ENCODE measurements at regions of chr6 and their contacts with region 1.

Region 1: DNA sequence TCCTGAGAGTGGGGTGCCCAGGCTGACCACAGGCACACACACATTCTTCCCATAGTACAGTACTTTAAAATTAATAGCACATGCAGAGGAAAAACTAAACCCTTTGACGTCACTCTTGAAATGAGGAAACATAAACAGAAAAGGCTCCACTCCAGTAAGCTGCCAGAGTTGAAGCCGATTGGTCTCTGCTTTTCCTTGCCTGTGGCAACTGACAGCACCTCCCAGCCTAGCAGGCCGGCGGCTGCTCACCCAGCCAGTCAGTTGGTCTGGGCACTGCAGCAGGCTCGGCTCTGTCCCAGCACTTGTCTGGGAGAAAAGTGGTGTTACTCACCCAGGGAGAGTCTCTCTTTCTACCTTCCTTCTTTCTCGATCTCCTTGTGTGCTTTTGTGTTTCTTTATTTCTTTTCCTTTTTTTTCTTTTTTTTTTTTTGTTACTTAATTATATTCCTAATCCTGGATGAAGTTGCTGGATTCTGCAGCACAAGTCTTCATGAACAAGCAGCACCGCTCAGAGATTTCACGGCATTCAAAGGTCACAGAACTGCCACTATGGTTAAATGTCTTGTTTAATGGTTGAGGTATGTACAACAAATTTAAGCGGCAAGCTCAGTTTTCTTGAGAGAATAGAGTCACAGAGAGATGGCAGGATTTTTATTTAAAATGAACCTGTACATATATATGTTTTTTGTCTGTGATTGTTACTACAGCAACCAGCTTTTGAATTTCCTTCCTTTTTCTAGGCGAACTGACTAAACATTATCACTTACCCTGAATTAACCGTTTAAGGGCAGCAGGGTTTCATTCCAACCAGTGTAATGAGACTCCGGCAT is at the start of gene PDE7B:
- DNase-seq: peak; percentile 95
- H3K4me3 Mint-ChIP-seq: peak within 1 kb of the TSS; percentile 75
- H3K27ac Mint-ChIP-seq: peak within 1 kb of the TSS; percentile 90
- H3K4me1 Mint-ChIP-seq: peaks cover 15% of the 10 kb centered on the region
- H3K27me3 Mint-ChIP-seq: no peaks in the 10 kb centered on the region
- CTCF ChIP-seq: no peak
- total RNA-seq, gene PDE7B: 0.42 and 1.4 TPM in 2 replicates

Region 2: DNA sequence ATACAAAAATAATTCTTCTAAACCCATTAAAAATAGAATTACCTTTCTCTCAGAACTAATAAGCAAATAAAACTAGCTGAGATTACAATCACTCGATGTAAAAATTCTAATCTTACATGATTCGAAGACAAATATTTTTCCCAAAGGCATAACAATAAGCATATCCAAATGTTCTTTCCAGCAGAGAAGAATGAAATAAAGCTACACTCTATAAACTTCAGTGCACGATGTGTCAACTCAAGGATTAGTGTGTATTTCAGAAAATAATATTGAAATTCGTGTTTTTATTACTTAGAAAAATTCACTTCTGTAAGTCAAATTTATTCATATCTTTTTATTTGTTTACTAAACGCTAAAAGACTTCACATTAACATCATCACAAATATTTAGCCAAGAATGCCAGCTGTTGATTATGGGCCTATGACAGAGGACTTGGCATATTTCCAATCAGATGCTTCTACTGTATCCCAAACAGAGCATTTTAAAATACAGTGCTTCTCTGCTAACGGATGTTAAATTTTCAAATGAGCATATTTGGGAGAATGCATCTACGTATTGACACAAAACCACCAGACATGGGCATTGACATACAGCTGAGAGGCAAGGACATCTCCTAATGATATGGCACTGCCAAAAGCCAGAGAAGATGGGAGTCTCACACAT is 54.9 kb before region 1 on chr6:
- CTCF ChIA-PET with region 1: no interaction called
- POLR2A ChIA-PET with region 1: no interaction called
- intact Hi-C with region 1: no loop called
- DNase-seq: no peak
- H3K4me3 Mint-ChIP-seq: no peak overlapping the region
- H3K27ac Mint-ChIP-seq: no peak overlapping the region
- H3K4me1 Mint-ChIP-seq: no peaks in the 10 kb centered on the region
- H3K27me3 Mint-ChIP-seq: no peaks in the 10 kb centered on the region
- CTCF ChIP-seq: no peak

Region 3: GRCh38 chr6:135830452-135830881 is 21.2 kb before region 1 on chr6:
- CTCF ChIA-PET with region 1: no interaction called
- POLR2A ChIA-PET with region 1: interaction called, 10 read pairs
- intact Hi-C with region 1: no loop called
- DNase-seq: peak; percentile 85
- H3K4me3 Mint-ChIP-seq: peak overlapping the region; percentile 54
- H3K27ac Mint-ChIP-seq: peak overlapping the region; percentile 53
- H3K4me1 Mint-ChIP-seq: peaks cover 19% of the 10 kb centered on the region
- H3K27me3 Mint-ChIP-seq: no peaks in the 10 kb centered on the region
- CTCF ChIP-seq: no peak

Region 4: GRCh38 chr6:135901774-135902524 is 50.3 kb after region 1 on chr6:
- CTCF ChIA-PET with region 1: interaction called, 3 read pairs
- POLR2A ChIA-PET with region 1: interaction called, 28 read pairs
- intact Hi-C with region 1: loop called (anchors 5 kb)
- DNase-seq: peak; percentile 87
- H3K4me3 Mint-ChIP-seq: peak overlapping the region; percentile 63
- H3K27ac Mint-ChIP-seq: peak overlapping the region; percentile 92
- H3K4me1 Mint-ChIP-seq: peaks cover 41% of the 10 kb centered on the region
- H3K27me3 Mint-ChIP-seq: no peaks in the 10 kb centered on the region
- CTCF ChIP-seq: no peak

Region 5: DNA sequence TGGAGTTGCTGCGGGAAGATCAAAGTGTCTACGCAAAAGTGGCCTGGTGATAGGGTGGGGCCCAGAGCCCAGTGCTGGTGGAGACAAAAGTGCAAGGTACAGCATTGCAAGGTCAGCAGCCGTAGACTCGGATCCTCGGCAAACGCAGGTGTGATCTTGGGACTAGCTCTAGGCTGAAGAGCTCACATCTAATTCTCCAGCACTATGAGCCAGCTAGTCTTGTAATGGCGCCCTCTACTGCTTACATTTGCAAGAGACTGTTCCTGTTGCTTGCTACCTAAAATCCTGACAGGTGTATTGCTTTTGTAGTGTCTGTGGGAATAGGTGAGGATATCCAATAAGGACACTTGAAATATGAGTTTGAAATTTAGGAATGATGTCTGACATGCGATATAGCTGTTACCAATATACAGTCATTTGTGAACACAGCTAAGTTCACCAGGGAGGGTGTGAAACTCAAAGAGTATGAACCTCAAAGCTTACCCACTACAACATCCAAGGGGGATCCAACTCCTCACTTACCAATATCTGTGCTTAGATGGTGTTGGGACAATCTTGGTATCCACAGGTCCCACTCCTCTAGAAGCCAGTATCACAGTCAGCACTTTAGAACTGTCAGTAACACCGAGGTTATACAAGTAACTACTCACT is 58.2 kb after region 1 on chr6:
- CTCF ChIA-PET with region 1: interaction called, 5 read pairs
- POLR2A ChIA-PET with region 1: interaction called, 10 read pairs
- intact Hi-C with region 1: no loop called
- DNase-seq: peak; percentile 83
- H3K4me3 Mint-ChIP-seq: no peak overlapping the region
- H3K27ac Mint-ChIP-seq: no peak overlapping the region
- H3K4me1 Mint-ChIP-seq: peaks cover 24% of the 10 kb centered on the region
- H3K27me3 Mint-ChIP-seq: no peaks in the 10 kb centered on the region
- CTCF ChIP-seq: peak; percentile 57

Measured in MCF 10A (cell line).